K562 (cell line): ENCODE measurements at regions of chr15 and their contacts with region 1.

Region 1: DNA sequence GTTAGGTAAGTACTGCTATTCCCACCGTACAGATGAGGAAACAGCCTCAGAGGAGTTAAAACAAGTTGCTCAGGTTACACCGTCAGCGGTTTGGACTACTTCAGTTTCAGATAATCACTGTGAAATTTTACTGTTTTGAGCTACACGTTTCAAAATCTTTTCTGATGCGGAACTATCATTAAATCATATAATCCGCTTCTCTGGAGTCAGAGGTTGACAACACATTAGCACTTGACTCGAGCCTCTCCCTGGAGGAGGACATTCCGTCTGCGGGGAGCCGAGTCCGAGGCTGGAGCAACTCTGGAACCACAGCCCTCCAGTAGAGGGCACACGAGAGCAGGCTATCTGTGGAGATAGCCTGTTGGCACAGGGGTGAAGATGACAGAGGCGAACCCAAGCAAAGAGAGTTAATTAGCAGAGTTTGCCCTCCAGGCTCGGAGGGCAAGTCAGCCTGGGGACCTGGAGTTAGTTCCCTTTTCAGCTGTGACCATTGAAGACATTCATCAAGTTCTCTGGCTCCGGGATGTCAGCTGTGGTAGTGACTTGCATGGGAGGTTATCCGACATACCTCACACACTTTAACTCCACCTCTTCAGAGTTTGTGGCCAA is 131.2 kb downstream of the IGF1R start:
- DNase-seq: peak; percentile 50 to 76 (median 60)
- ATAC-seq: peak; percentile 98
- H3K4me3 ChIP-seq: no peak overlapping the region
- H3K27ac ChIP-seq: no peak overlapping the region
- H3K4me1 ChIP-seq: peaks cover 7% of the 10 kb centered on the region in 2 experiments; a peak in 3 of 5 replicates
- H3K27me3 ChIP-seq: peaks cover 2 to 29% of the 10 kb centered on the region in 2 experiments; a peak in 2 of 5 replicates
- CTCF ChIP-seq: peak; percentile 79 to 92 (median 80)
- EP300 ChIP-seq: no peak
- POLR2A ChIP-seq: no peak
- RAD21 ChIP-seq: peak; percentile 47 to 73

Region 2: GRCh38 chr15:98881526-98882520 is 102.3 kb after region 1 on chr15:
- CTCF ChIA-PET with region 1: no interaction called
- POLR2A ChIA-PET with region 1: no interaction called
- in situ Hi-C with region 1: no loop called
- intact Hi-C with region 1: loop called (anchors 10 kb)
- DNase-seq: peak; percentile 41 to 50 (median 46)
- ATAC-seq: peak; percentile 76
- H3K4me3 ChIP-seq: no peak overlapping the region
- H3K27ac ChIP-seq: no peak overlapping the region
- H3K4me1 ChIP-seq: no peaks in the 10 kb centered on the region; a peak in 1 of 5 replicates
- H3K27me3 ChIP-seq: peaks cover 10 to 26% of the 10 kb centered on the region in 2 experiments; a peak in 4 of 5 replicates
- CTCF ChIP-seq: peak; percentile 44 to 57 (median 56); a peak in 5 of 6 replicates
- EP300 ChIP-seq: no peak
- POLR2A ChIP-seq: no peak
- RAD21 ChIP-seq: peak; percentile 21 to 57; a peak in 3 of 4 replicates

Region 3: DNA sequence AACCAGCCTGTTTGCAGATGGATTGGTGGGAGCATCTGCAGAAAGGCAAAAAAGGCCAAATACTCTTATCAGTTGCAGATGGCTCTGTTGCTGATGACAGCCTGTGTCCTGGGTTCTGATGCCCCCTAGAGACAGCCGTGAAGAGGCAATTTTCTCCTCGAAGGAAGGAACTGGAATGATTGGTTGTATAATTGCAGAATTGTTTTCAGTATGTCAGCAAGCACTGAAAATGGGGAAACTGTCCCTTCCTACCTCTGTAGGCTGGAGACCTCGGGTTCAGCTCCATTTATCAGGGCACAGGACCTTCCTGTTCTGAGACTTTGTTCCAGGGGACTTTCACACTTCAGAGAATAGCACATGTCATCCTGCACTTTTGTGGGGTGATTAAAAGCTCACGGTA is 125.0 kb after region 1 on chr15:
- CTCF ChIA-PET with region 1: interaction called, 7 read pairs
- POLR2A ChIA-PET with region 1: no interaction called
- in situ Hi-C with region 1: no loop called
- intact Hi-C with region 1: loop called (anchors 5 kb)
- DNase-seq: peak; percentile 47 to 67 (median 53)
- ATAC-seq: peak; percentile 88
- H3K4me3 ChIP-seq: no peak overlapping the region
- H3K27ac ChIP-seq: no peak overlapping the region
- H3K4me1 ChIP-seq: no peaks in the 10 kb centered on the region; a peak in 1 of 5 replicates
- H3K27me3 ChIP-seq: peaks cover 10 to 47% of the 10 kb centered on the region in 2 experiments
- CTCF ChIP-seq: peak; percentile 64 to 78 (median 74)
- EP300 ChIP-seq: no peak
- POLR2A ChIP-seq: no peak
- RAD21 ChIP-seq: peak; percentile 67 to 78

Region 4: DNA sequence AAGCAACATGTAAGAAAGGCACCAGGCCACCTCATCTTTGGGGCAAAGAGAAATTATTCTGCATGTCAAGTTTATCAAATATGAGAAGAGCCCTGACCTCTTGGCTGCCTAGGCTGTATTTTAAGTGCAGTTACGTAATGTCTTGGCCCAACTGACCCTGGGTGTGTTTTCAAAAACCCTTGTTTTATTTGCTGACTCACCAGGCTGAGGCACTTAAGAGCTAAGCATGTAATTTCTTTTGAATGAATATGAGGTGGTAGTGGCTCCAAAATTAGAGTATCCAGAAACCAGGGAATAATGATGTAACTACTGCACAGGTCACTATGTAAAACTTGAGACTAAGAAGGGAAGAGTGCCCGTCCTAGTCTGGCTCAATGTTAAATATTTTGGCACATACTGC is 203.8 kb after region 1 on chr15:
- CTCF ChIA-PET with region 1: no interaction called
- POLR2A ChIA-PET with region 1: no interaction called
- in situ Hi-C with region 1: loop called (anchors 10 kb)
- intact Hi-C with region 1: no loop called
- DNase-seq: peak; percentile 31 to 77 (median 54)
- ATAC-seq: peak; percentile 91
- H3K4me3 ChIP-seq: no peak overlapping the region
- H3K27ac ChIP-seq: peak overlapping the region; percentile 69
- H3K4me1 ChIP-seq: peaks cover 0 to 13% of the 10 kb centered on the region in 2 experiments; a peak in 4 of 5 replicates
- H3K27me3 ChIP-seq: no peaks in the 10 kb centered on the region; a peak in 1 of 5 replicates
- CTCF ChIP-seq: no peak
- EP300 ChIP-seq: peak; percentile 50
- POLR2A ChIP-seq: no peak
- RAD21 ChIP-seq: no peak

Region 5: GRCh38 chr15:99059010-99059981 is 279.7 kb after region 1 on chr15:
- CTCF ChIA-PET with region 1: interaction called, 8 read pairs
- POLR2A ChIA-PET with region 1: no interaction called
- in situ Hi-C with region 1: no loop called
- intact Hi-C with region 1: loop called (anchors 10 kb)
- DNase-seq: peak; percentile 61 to 76 (median 76)
- ATAC-seq: peak; percentile 96
- H3K4me3 ChIP-seq: no peak overlapping the region
- H3K27ac ChIP-seq: no peak overlapping the region
- H3K4me1 ChIP-seq: peaks cover 0 to 9% of the 10 kb centered on the region in 2 experiments; a peak in 2 of 5 replicates
- H3K27me3 ChIP-seq: peaks cover 9 to 51% of the 10 kb centered on the region in 2 experiments; a peak in 3 of 5 replicates
- CTCF ChIP-seq: peak; percentile 43 to 77 (median 62); a peak in 5 of 6 replicates
- EP300 ChIP-seq: no peak
- POLR2A ChIP-seq: no peak
- RAD21 ChIP-seq: peak; percentile 50 to 70

Region 6: GRCh38 chr15:99076552-99077308 is 297.2 kb after region 1 on chr15:
- CTCF ChIA-PET with region 1: interaction called, 3 read pairs
- POLR2A ChIA-PET with region 1: no interaction called
- in situ Hi-C with region 1: no loop called
- intact Hi-C with region 1: loop called (anchors 1 kb)
- DNase-seq: peak; percentile 58 to 68 (median 62)
- ATAC-seq: peak; percentile 93
- H3K4me3 ChIP-seq: no peak overlapping the region
- H3K27ac ChIP-seq: no peak overlapping the region
- H3K4me1 ChIP-seq: no peaks in the 10 kb centered on the region
- H3K27me3 ChIP-seq: peaks cover 0 to 2% of the 10 kb centered on the region in 2 experiments; a peak in 1 of 5 replicates
- CTCF ChIP-seq: peak; percentile 77 to 84 (median 81)
- EP300 ChIP-seq: no peak
- POLR2A ChIP-seq: no peak
- RAD21 ChIP-seq: peak; percentile 62 to 87